ENCODE measurements at regions of chr20 and their contacts with region 1.

Region 1: GRCh38 chr20:31951530-31952453 is at the start of gene PDRG1:
- DNase-seq: peak; percentile 99
- ATAC-seq: peak; percentile 98 to 99 (median 99)
- H3K4me3 ChIP-seq: peak within 1 kb of the TSS; percentile 92
- H3K4me3 Mint-ChIP-seq: peak within 1 kb of the TSS; percentile 99
- H3K27ac ChIP-seq: peak within 1 kb of the TSS; percentile 62
- H3K27ac Mint-ChIP-seq: peak within 1 kb of the TSS; percentile 91 to 98
- H3K4me1 ChIP-seq: peaks cover 16% of the 10 kb centered on the region
- H3K4me1 Mint-ChIP-seq: peaks cover 35% of the 10 kb centered on the region in 2 donors
- H3K27me3 ChIP-seq: no peaks in the 10 kb centered on the region
- H3K27me3 Mint-ChIP-seq: peaks cover 15 to 23% of the 10 kb centered on the region in 2 donors
- CTCF ChIP-seq: peak; percentile 85
- total RNA-seq, gene PDRG1: 9.0 to 12.8 (median 10.4) TPM

Region 2: GRCh38 chr20:31547017-31547675 is 404.6 kb before region 1 on chr20:
- intact Hi-C with region 1: no loop called
- DNase-seq: peak; percentile 78 to 92
- ATAC-seq: peak; percentile 90 to 91 (median 91)
- H3K4me3 ChIP-seq: peak overlapping the region; percentile 67
- H3K4me3 Mint-ChIP-seq: peak overlapping the region; percentile 93
- H3K27ac ChIP-seq: peak overlapping the region; percentile 93
- H3K27ac Mint-ChIP-seq: peak overlapping the region; percentile 96
- H3K4me1 ChIP-seq: peaks cover 27% of the 10 kb centered on the region
- H3K4me1 Mint-ChIP-seq: peaks cover 27 to 39% of the 10 kb centered on the region in 2 donors
- H3K27me3 ChIP-seq: no peaks in the 10 kb centered on the region
- H3K27me3 Mint-ChIP-seq: no peaks in the 10 kb centered on the region
- CTCF ChIP-seq: no peak

Region 3: DNA sequence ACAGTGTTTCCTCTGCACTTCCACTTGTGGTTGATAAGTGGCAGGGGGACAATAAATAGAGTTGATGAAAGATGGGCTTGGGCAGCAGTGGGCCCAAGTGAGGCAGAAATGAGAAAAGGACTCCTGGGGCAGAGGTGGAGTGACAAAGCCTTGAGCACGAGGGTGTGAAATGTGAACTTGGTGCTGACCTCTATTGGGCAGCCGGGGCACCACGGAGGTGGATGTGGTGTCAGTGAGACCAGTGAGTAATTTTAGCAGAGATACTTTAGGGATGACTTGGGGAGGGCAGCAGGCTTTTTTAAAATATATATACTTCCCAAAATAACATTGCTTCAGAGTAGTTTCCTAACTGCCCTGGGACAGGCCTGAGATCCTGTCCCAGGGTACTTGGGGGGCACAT is 163.2 kb before region 1 on chr20:
- intact Hi-C with region 1: no loop called
- DNase-seq: no peak
- ATAC-seq: peak in 2 of 3 donors; percentile 49 to 65
- H3K4me3 ChIP-seq: no peak overlapping the region
- H3K4me3 Mint-ChIP-seq: no peak overlapping the region
- H3K27ac ChIP-seq: no peak overlapping the region
- H3K27ac Mint-ChIP-seq: no peak overlapping the region
- H3K4me1 ChIP-seq: no peaks in the 10 kb centered on the region
- H3K4me1 Mint-ChIP-seq: peaks cover 0 to 6% of the 10 kb centered on the region in 2 donors
- H3K27me3 ChIP-seq: no peaks in the 10 kb centered on the region
- H3K27me3 Mint-ChIP-seq: no peaks in the 10 kb centered on the region
- CTCF ChIP-seq: no peak

Region 4: DNA sequence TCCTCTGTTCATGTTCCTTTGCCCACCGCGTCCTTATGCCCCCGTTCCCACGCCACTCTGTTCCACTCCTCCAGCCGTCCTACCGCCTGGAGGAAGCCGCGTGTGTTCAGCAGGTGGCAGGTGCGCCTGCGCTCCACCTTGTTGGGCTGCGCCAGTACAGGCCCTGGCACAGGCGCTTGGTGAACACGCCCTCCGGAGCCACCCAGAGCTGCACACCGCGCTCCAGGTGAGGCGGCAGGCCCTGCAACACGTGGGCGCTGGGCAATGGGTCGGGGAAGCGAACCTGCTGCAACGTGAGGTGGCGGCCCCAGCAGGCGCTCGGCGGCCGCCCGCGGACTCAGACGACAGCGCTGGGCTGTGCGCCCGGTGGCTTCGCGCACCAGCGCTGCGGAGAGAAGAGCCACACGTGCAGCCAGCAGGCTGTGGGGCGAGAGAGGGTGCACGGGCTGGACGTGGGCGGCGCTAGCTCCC is 102.3 kb before region 1 on chr20:
- intact Hi-C with region 1: loop called (anchors 1 kb)
- DNase-seq: no peak
- ATAC-seq: no peak
- H3K4me3 ChIP-seq: no peak overlapping the region
- H3K4me3 Mint-ChIP-seq: no peak overlapping the region
- H3K27ac ChIP-seq: no peak overlapping the region
- H3K27ac Mint-ChIP-seq: no peak overlapping the region
- H3K4me1 ChIP-seq: peaks cover 4% of the 10 kb centered on the region
- H3K4me1 Mint-ChIP-seq: no peaks in the 10 kb centered on the region
- H3K27me3 ChIP-seq: no peaks in the 10 kb centered on the region
- H3K27me3 Mint-ChIP-seq: peaks cover 12 to 18% of the 10 kb centered on the region in 2 donors
- CTCF ChIP-seq: no peak

Region 5: DNA sequence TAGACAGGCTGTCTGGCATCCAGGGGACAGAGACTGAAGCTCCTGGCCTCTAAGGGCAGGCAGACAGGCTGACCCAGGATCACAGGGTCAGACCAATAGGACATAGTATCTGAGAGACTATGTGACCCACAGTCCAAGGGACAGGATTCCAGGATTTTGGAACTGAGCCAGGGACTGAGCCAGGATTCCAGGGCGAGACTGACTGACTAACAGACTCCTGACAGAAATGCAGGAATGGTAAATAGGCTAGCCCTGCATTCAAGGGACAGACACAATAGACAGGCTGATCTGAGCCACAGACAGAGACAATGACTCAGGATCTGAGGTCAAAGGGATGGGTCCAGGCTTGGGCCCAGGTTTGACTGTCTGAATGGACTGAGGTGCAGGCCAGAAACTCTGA is 36.0 kb after region 1 on chr20:
- intact Hi-C with region 1: no loop called
- DNase-seq: no peak
- ATAC-seq: no peak
- H3K4me3 ChIP-seq: no peak overlapping the region
- H3K4me3 Mint-ChIP-seq: no peak overlapping the region
- H3K27ac ChIP-seq: no peak overlapping the region
- H3K27ac Mint-ChIP-seq: no peak overlapping the region
- H3K4me1 ChIP-seq: no peaks in the 10 kb centered on the region
- H3K4me1 Mint-ChIP-seq: no peaks in the 10 kb centered on the region
- H3K27me3 ChIP-seq: no peaks in the 10 kb centered on the region
- H3K27me3 Mint-ChIP-seq: peaks cover 6 to 9% of the 10 kb centered on the region in 2 donors
- CTCF ChIP-seq: no peak

Region 6: DNA sequence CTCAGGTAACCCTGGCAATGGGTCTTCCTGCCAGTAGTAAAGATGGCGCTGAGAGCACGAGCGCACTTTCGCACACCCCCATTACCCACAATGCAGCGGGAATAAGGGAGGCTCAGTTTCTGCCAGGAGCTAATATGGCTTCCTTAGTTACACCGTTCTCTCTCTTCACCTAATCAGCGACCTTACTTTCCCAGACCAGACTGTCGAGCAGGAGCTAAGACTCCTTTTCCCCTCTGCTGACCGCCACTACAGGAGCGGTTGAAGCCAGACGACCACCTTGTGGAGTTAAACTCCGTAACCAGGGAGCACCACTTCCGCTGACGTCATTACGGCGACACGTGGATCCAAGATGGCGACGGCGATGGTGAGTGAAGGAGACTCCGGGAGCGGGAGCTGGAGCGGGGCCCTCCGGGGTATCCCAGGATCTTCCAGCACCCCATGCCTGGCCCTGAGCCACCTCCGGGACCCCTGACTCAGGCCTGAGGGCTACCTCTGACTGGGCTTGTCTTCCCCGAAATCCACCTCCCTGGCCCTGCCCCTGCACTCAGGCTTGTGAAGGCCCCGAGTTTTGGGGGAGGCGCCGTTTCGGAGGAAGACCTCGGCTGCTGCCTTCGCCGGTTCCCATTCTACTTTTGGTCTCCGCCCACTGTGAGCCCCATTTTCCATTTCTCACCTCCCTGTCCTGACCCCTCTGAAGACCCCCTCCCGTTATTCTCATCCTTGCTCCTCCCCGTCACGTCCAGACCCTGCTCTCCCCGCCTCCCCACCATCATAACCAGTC is 157.8 kb after region 1 on chr20 and contains the start of gene TM9SF4:
- intact Hi-C with region 1: no loop called
- DNase-seq: peak; percentile 89 to 97
- ATAC-seq: peak; percentile 90 to 94 (median 92)
- H3K4me3 ChIP-seq: peak within 1 kb of the TSS; percentile 85
- H3K4me3 Mint-ChIP-seq: peak within 1 kb of the TSS; percentile 92
- H3K27ac ChIP-seq: peak within 1 kb of the TSS; percentile 89
- H3K27ac Mint-ChIP-seq: peak within 1 kb of the TSS; percentile 98 to 99
- H3K4me1 ChIP-seq: peaks cover 18% of the 10 kb centered on the region
- H3K4me1 Mint-ChIP-seq: peaks cover 24 to 38% of the 10 kb centered on the region in 2 donors
- H3K27me3 ChIP-seq: no peaks in the 10 kb centered on the region
- H3K27me3 Mint-ChIP-seq: no peaks in the 10 kb centered on the region
- CTCF ChIP-seq: no peak
- total RNA-seq, gene TM9SF4: 35.8 to 42.8 (median 41.2) TPM

Measured in natural killer cell (primary cell).